ENCODE measurements at regions of chrX and their contacts with region 1.

Region 1: DNA sequence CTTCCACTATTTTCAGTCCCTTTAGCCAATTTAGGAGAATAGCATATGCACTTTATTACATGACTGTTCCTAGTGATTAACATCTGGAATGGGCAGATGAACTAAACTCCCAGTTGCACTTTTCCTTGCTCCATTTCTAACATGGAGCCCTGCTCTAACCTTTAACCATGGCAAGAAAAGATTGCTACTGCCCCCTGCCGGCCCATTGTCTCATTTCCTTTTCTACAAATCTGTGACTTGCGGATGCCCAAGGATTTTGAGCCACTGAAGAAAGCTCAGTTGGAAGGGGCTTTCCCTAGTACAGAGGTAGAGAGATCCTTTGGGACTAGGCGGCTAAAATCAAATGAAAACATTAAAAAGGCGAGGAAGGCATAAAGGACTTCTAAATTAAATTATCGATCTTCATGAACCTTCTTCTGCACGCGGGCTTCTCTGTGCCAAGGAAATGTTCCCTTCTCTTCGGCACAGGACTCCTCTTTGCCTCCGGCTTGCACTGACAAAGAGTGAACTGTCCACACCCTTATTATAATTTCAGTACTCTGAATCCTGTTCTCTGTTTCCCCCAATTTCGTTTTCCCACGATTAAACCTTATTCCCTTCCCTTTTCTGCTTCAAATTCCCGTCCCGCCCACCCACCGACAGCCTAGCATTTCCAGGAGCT is 577 bp upstream of the GLRA2 start:
- DNase-seq: peak; percentile 60
- H3K4me3 ChIP-seq: peak overlapping the region in 1 of 3 experiments; percentile 40
- H3K27ac ChIP-seq: no peak overlapping the region
- H3K4me1 ChIP-seq: no peaks in the 10 kb centered on the region
- H3K27me3 ChIP-seq: no peaks in the 10 kb centered on the region
- CTCF ChIP-seq: peak; percentile 54 to 83

Region 2: GRCh38 chrX:14095702-14096101 is 433.1 kb before region 1 on chrX:
- CTCF ChIA-PET with region 1: interaction called, 4 read pairs
- dilution Hi-C with region 1: no loop called
- in situ Hi-C with region 1: loop called (anchors 10 kb)
- intact Hi-C with region 1: loop called (anchors 1 kb)
- DNase-seq: peak; percentile 58
- H3K4me3 ChIP-seq: no peak overlapping the region
- H3K27ac ChIP-seq: no peak overlapping the region
- H3K4me1 ChIP-seq: no peaks in the 10 kb centered on the region
- H3K27me3 ChIP-seq: peaks cover 3% of the 10 kb centered on the region
- CTCF ChIP-seq: peak; percentile 89 to 93

Region 3: DNA sequence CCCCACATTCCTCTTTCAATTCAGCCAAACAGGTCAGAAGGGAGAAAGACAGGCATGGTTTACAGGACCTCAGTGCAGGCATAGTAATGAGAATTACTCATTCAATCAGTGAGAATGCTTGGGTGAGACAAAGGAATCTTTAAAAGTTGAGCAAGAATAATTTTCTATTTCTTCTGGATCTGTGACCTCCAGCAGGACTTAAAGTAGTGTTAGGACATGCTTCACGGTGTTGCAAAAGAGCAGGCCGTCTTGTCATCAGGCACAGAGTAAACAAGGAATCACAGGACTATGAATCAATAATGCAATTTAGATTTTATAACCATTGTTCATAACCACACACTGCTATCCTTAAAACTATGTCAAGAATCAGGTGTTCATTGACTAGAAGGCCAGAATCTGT is 130.0 kb before region 1 on chrX:
- CTCF ChIA-PET with region 1: no interaction called
- dilution Hi-C with region 1: no loop called
- in situ Hi-C with region 1: no loop called
- intact Hi-C with region 1: loop called (anchors 10 kb)
- DNase-seq: peak; percentile 93
- H3K4me3 ChIP-seq: no peak overlapping the region
- H3K27ac ChIP-seq: peak overlapping the region; percentile 66
- H3K4me1 ChIP-seq: peaks cover 17% of the 10 kb centered on the region
- H3K27me3 ChIP-seq: no peaks in the 10 kb centered on the region
- CTCF ChIP-seq: no peak

Region 4: GRCh38 chrX:15107367-15107988 is 578.7 kb after region 1 on chrX:
- CTCF ChIA-PET with region 1: no interaction called
- dilution Hi-C with region 1: no loop called
- in situ Hi-C with region 1: no loop called
- intact Hi-C with region 1: no loop called
- DNase-seq: no peak
- H3K4me3 ChIP-seq: no peak overlapping the region
- H3K27ac ChIP-seq: no peak overlapping the region
- H3K4me1 ChIP-seq: no peaks in the 10 kb centered on the region
- H3K27me3 ChIP-seq: no peaks in the 10 kb centered on the region
- CTCF ChIP-seq: peak; percentile 7 to 50

Region 5: GRCh38 chrX:15143050-15143824 is 614.5 kb after region 1 on chrX:
- CTCF ChIA-PET with region 1: no interaction called
- dilution Hi-C with region 1: no loop called
- in situ Hi-C with region 1: no loop called
- intact Hi-C with region 1: loop called (anchors 2 kb)
- DNase-seq: peak; percentile 34
- H3K4me3 ChIP-seq: no peak overlapping the region
- H3K27ac ChIP-seq: no peak overlapping the region
- H3K4me1 ChIP-seq: no peaks in the 10 kb centered on the region
- H3K27me3 ChIP-seq: no peaks in the 10 kb centered on the region
- CTCF ChIP-seq: peak; percentile 90 to 93

Measured in mammary epithelial cell (primary cell).